Mucosa of descending colon (tissue), 3 donors: ENCODE measurements at regions of chr6 and their contacts with region 1.

Region 1: GRCh38 chr6:26156076-26156849 is 69.0 kb downstream of the HFE start:
- DNase-seq: peak; percentile 94 to 96 (median 95)
- ATAC-seq: peak; percentile 73
- H3K4me3 ChIP-seq: peak overlapping the region; percentile 69
- H3K4me1 ChIP-seq: peaks cover 19% of the 10 kb centered on the region
- CTCF ChIP-seq: no peak

Region 2: GRCh38 chr6:26122793-26123674 is 33.2 kb before region 1 on chr6:
- intact Hi-C with region 1: loop called (anchors 2 to 5 kb)
- DNase-seq: peak; percentile 89 to 97 (median 93)
- ATAC-seq: peak; percentile 76
- H3K4me3 ChIP-seq: peak overlapping the region; percentile 79
- H3K4me1 ChIP-seq: peaks cover 16% of the 10 kb centered on the region
- CTCF ChIP-seq: no peak

Region 3: DNA sequence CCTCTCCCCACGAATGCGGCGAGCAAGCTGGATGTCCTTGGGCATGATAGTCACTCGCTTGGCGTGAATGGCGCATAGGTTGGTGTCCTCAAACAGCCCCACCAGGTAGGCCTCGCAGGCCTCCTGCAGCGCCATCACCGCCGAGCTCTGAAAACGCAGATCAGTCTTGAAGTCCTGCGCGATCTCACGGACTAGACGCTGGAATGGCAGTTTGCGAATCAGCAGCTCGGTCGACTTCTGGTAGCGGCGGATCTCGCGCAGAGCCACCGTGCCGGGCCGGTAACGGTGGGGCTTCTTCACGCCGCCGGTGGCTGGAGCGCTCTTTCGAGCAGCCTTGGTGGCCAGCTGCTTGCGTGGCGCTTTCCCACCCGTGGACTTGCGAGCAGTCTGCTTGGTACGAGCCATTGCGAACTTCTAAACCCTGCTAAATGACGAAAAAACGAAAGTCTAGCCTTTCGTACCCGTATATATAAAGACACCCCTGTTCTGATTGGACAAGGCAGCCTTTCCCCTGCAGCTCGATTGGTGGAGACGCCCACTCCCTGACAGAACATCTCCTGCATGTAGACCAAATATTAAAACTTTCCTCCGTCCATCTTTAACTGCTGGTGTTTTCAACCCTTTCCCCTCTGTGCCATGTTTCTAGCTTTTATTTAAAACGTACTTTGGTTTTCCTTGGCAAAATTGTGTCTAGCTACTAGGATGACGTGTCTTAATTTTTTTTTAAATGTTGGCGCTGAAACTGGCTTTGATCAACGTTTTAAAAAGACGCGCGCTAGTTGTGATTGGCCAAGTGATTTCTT is 40.8 kb after region 1 on chr6:
- intact Hi-C with region 1: loop called in 1 of 2 experiments (anchors 5 kb)
- DNase-seq: peak; percentile 75 to 86 (median 82)
- ATAC-seq: peak; percentile 64
- H3K4me3 ChIP-seq: peak overlapping the region; percentile 18
- H3K4me1 ChIP-seq: peaks cover 6% of the 10 kb centered on the region
- CTCF ChIP-seq: no peak

Region 4: DNA sequence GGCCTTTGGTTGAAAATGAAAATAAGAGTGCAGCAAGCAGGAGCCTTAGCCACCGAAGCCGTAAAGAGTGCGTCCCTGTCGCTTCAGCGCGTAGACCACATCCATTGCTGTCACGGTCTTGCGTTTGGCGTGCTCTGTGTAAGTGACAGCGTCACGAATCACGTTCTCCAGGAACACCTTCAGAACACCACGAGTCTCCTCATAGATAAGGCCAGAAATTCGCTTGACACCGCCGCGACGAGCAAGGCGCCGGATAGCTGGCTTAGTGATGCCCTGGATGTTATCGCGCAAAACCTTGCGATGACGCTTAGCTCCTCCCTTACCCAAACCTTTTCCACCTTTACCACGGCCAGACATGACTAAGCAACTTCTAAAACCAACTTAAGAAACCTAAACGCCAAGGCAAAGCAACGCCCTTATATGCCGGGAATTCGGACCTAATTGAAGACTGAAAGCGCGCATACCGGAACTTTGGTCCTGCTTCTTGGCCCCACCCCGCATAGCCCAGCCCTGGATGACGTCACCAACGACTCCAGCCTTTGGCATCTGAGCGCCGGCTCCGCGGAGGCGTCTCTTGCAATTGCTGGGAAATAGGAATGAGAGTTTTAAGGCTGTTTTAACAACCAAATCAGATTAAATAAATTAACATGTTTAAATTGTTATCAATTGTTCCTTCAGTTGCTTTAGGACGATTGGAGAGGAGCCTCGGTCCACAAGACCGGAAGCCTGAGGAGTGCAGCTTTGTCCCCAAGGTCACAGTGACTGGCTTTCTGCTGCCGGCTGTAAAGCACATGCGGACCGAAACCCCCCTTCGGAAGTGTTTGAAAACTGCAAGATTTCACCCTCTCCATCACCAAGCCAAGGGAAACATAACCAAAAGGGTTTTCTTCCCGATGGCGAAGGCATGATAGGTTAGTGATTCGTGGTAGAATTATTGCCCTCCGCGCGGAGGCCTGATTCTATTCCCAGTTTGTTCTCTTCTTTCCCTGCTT is 129.2 kb after region 1 on chr6:
- intact Hi-C with region 1: no loop called
- DNase-seq: peak; percentile 96 to 100 (median 98)
- ATAC-seq: peak; percentile 94
- H3K4me3 ChIP-seq: peak overlapping the region; percentile 31
- H3K4me1 ChIP-seq: peaks cover 4% of the 10 kb centered on the region
- CTCF ChIP-seq: no peak